Mammary epithelial cell (primary cell): ENCODE measurements at regions of chr14 and their contacts with region 1.

Region 1: DNA sequence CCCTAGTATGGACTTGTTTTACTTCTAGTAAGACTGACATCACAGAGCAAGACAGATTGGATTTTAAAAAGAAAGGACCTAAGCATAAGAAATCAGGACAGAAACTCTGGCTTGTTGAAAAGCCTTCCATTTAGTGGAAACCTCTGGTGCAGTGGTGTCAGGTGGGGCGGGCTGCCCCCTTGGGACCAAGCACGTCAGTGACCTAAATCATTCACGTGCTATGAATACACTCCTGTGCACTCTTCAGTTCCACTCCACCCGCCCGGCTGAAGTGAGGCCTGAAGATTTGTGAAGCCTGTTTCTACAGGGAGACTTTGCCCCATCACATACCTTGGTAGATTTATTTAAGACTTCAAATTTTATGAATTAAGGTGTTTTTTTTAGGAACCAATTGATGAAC is 58.2 kb upstream of the STRN3 start:
- DNase-seq: no peak
- H3K4me3 ChIP-seq: no peak overlapping the region
- H3K27ac ChIP-seq: no peak overlapping the region
- H3K4me1 ChIP-seq: peaks cover 7% of the 10 kb centered on the region
- H3K27me3 ChIP-seq: no peaks in the 10 kb centered on the region
- CTCF ChIP-seq: no peak

Region 2: DNA sequence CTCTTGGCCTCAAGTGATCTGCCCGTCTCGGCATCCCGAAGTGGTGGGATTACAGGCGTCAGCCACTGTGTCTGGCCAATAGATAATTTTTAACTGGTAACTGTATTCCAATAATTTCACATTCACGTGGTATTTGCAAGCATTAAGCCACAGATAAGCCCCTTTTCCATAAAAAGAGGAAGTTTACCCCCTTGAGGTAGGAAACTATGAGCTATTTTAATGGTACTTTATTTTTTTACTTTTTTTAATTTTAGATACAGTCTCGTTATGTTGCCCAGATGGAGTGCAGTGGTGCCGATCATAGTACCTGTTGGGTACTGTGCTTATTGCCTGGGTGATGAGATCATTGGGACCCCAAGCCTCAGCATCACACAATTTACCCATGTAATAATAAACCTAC is 101.9 kb before region 1 on chr14:
- CTCF ChIA-PET with region 1: interaction called, 4 read pairs
- dilution Hi-C with region 1: no loop called
- in situ Hi-C with region 1: loop called (anchors 5 kb)
- intact Hi-C with region 1: loop called (anchors 1 kb)
- DNase-seq: no peak
- H3K4me3 ChIP-seq: no peak overlapping the region
- H3K27ac ChIP-seq: no peak overlapping the region
- H3K4me1 ChIP-seq: no peaks in the 10 kb centered on the region
- H3K27me3 ChIP-seq: no peaks in the 10 kb centered on the region
- CTCF ChIP-seq: no peak